Activated CD4-positive, alpha-beta T cell treated with anti-CD3 and anti-CD28 coated beads for 36 hours (primary cell): ENCODE measurements at regions of chr2 and their contacts with region 1.

Region 1: GRCh38 chr2:30231212-30231995 is at the start of gene LBH:
- DNase-seq: peak; percentile 94
- ATAC-seq: peak; percentile 41
- H3K4me3 Mint-ChIP-seq: peak within 1 kb of the TSS; percentile 76
- H3K27ac Mint-ChIP-seq: peak within 1 kb of the TSS; percentile 93
- H3K4me1 Mint-ChIP-seq: peaks cover 65% of the 10 kb centered on the region
- H3K27me3 Mint-ChIP-seq: peaks cover 10% of the 10 kb centered on the region
- total RNA-seq, gene LBH: 89.6 to 108 TPM

Region 2: GRCh38 chr2:30252723-30253701 is 21.6 kb after region 1 on chr2:
- CTCF ChIA-PET with region 1: interaction called, 72 read pairs
- POLR2A ChIA-PET with region 1: interaction called, 5 read pairs
- intact Hi-C with region 1: loop called (anchors 1 to 2 kb)
- DNase-seq: peak; percentile 87
- ATAC-seq: peak; percentile 77
- H3K4me3 Mint-ChIP-seq: peak overlapping the region; percentile 42
- H3K27ac Mint-ChIP-seq: peak overlapping the region; percentile 88
- H3K4me1 Mint-ChIP-seq: peaks cover 96% of the 10 kb centered on the region
- H3K27me3 Mint-ChIP-seq: no peaks in the 10 kb centered on the region

Region 3: DNA sequence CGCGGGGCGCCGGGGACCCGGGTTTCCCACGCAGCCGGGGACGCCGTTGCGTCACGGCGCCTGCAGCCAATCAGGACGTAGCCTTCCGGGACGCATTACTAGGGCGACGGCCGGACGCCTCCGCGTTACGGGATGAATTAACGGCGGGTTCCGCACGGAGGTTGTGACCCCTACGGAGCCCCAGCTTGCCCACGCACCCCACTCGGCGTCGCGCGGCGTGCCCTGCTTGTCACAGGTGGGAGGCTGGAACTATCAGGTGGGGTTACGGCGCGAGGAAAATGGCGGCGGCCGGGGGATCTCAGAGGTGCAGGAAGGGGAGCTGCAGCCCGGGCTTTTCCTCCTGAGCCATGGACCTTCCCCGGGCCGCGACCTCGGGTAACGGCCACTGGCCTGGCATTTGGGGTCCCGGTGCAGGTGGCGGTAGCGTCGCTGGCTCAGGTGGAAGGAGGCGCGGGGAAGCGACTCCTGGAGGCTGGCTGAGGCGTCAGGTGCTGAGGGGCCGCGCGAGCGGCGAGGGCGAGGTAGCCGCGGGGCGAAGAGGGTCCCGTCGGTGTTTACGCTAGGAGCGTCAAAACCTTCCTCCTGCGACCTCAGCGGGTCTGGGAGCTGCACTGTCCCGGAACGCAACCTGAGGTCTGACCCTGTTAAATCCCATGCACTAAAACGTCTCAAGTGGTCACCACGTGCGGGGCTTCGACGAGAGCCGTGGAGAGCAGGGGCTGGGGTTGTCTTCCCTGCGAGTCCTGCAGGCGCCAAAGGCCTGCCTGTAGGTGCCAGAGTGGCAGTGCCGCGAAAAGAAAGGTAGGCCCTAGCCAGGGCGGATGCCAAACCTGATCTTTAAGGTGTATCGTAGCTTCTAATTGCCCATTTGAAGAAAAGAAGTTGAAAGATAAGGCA is 216.0 kb after region 1 on chr2 and contains the start of gene LCLAT1:
- CTCF ChIA-PET with region 1: interaction called, 3 read pairs
- POLR2A ChIA-PET with region 1: interaction called, 3 read pairs
- intact Hi-C with region 1: loop called (anchors 1 to 2 kb)
- DNase-seq: peak; percentile 91
- ATAC-seq: peak; percentile 80
- H3K4me3 Mint-ChIP-seq: peak within 1 kb of the TSS; percentile 87
- H3K27ac Mint-ChIP-seq: peak within 1 kb of the TSS; percentile 96
- H3K4me1 Mint-ChIP-seq: peaks cover 32% of the 10 kb centered on the region
- H3K27me3 Mint-ChIP-seq: no peaks in the 10 kb centered on the region
- total RNA-seq, gene LCLAT1: 18.5 to 21.7 TPM